Activated CD4-positive, alpha-beta memory T cell treated with anti-CD3 and anti-CD28 coated beads for 36 hours (primary cell): ENCODE measurements at regions of chr6 and their contacts with region 1.

Region 1: DNA sequence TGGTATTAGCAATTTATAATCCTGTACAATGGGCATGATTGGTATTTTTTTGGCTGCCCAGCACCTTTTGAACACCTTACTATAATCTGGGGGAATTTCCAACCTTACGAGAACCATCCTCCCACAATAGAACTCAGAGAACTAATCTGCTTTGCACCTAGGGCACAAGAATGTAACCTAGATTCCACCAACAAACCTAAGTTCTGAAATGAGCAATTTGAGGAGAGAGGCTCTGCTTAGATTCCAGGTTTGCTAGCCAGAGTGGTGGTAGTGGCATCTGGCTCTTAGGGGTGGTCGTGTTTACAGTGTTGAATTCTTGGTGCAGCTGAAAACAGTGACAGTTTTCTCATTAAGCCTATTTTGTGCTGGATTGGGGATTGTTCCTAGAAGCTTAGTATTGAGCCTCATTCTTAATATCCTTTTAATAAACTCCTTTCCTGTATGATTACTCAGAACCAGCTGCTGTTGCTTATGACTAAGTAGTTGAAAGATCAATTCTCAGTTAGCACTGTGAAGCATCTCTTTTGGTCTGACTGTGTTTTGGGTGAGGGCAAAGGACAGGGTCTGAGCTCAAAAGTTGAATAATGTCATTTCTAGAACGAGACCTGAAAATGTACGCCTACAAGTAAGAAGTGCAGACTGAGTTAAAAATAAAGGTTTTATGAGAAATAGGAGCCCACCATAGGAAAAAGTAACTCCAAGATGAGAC is 385.6 kb downstream of the CDKAL1 start:
- DNase-seq: peak; percentile 39
- H3K4me3 Mint-ChIP-seq: no peak overlapping the region
- H3K27ac Mint-ChIP-seq: peak overlapping the region; percentile 80
- H3K4me1 Mint-ChIP-seq: peaks cover 28% of the 10 kb centered on the region
- H3K27me3 Mint-ChIP-seq: no peaks in the 10 kb centered on the region

Region 2: DNA sequence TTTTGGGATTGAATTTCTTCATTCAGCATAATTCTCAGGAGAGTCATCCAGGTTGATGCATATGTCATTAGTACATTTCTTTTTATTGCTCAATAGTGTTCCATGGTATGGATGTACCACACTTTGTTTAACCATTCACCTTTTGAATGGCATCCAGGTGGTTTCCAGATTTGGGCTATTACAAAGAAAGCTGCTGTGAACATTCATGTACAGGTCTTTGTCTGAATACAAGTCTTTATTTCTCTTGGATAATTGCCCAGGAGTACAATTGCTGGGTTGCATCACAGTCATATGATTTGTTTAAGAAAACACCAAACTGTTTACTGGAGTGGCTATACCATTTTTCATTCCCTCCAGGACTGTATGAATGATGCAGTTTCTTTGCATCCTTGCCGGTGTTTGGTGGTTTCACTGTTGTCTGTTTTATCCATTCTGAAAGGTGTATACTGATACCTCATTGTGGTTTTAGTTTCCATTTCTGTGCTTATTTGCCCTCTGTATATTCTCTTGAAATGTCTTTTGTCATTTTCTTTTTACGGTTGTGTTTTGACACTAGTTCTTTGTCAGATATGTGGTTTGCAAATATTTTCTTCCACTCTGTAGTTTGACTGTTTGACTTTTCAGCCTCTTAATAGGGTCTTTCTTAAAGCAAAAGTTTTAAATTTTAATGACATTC is 376.8 kb before region 1 on chr6:
- CTCF ChIA-PET with region 1: no interaction called
- POLR2A ChIA-PET with region 1: no interaction called
- intact Hi-C with region 1: loop called (anchors 1 kb)
- DNase-seq: peak; percentile 44
- H3K4me3 Mint-ChIP-seq: no peak overlapping the region
- H3K27ac Mint-ChIP-seq: peak overlapping the region; percentile 42
- H3K4me1 Mint-ChIP-seq: peaks cover 44% of the 10 kb centered on the region
- H3K27me3 Mint-ChIP-seq: no peaks in the 10 kb centered on the region

Region 3: GRCh38 chr6:20708367-20709124 is 211.3 kb before region 1 on chr6:
- CTCF ChIA-PET with region 1: no interaction called
- POLR2A ChIA-PET with region 1: no interaction called
- intact Hi-C with region 1: loop called (anchors 5 kb)
- DNase-seq: peak; percentile 41
- H3K4me3 Mint-ChIP-seq: no peak overlapping the region
- H3K27ac Mint-ChIP-seq: no peak overlapping the region
- H3K4me1 Mint-ChIP-seq: peaks cover 52% of the 10 kb centered on the region
- H3K27me3 Mint-ChIP-seq: no peaks in the 10 kb centered on the region

Region 4: GRCh38 chr6:20870493-20870892 is 49.3 kb before region 1 on chr6:
- CTCF ChIA-PET with region 1: no interaction called
- POLR2A ChIA-PET with region 1: no interaction called
- intact Hi-C with region 1: no loop called
- DNase-seq: no peak
- H3K4me3 Mint-ChIP-seq: no peak overlapping the region
- H3K27ac Mint-ChIP-seq: no peak overlapping the region
- H3K4me1 Mint-ChIP-seq: no peaks in the 10 kb centered on the region
- H3K27me3 Mint-ChIP-seq: no peaks in the 10 kb centered on the region

Region 5: GRCh38 chr6:20978151-20978614 is 58.4 kb after region 1 on chr6:
- CTCF ChIA-PET with region 1: no interaction called
- POLR2A ChIA-PET with region 1: interaction called, 5 read pairs
- intact Hi-C with region 1: loop called (anchors 1 kb)
- DNase-seq: peak; percentile 15
- H3K4me3 Mint-ChIP-seq: no peak overlapping the region
- H3K27ac Mint-ChIP-seq: no peak overlapping the region
- H3K4me1 Mint-ChIP-seq: peaks cover 12% of the 10 kb centered on the region
- H3K27me3 Mint-ChIP-seq: no peaks in the 10 kb centered on the region

Region 6: DNA sequence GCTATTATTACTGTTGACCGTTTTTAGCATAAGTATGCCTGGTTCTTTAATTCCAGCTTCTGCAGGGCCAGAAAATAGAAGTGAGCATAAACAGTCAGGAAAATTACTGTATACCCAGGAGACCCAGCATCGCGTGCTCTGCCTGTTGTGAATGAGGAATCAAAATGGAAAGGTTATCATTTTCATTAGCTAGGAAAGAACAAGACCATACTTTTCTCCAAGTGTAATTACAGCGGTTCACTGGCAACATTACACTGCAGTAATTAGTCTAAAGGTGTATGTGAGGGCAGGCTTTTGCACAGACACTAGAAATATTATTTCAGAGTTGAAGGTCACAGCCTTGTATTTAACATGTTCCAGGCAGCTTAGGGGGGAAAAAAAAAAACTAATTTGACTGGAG is 269.9 kb after region 1 on chr6:
- CTCF ChIA-PET with region 1: no interaction called
- POLR2A ChIA-PET with region 1: no interaction called
- intact Hi-C with region 1: loop called (anchors 2 kb)
- DNase-seq: no peak
- H3K4me3 Mint-ChIP-seq: no peak overlapping the region
- H3K27ac Mint-ChIP-seq: no peak overlapping the region
- H3K4me1 Mint-ChIP-seq: peaks cover 27% of the 10 kb centered on the region
- H3K27me3 Mint-ChIP-seq: no peaks in the 10 kb centered on the region